ENCODE measurements at regions of chr2 and their contacts with region 1.

Region 1: DNA sequence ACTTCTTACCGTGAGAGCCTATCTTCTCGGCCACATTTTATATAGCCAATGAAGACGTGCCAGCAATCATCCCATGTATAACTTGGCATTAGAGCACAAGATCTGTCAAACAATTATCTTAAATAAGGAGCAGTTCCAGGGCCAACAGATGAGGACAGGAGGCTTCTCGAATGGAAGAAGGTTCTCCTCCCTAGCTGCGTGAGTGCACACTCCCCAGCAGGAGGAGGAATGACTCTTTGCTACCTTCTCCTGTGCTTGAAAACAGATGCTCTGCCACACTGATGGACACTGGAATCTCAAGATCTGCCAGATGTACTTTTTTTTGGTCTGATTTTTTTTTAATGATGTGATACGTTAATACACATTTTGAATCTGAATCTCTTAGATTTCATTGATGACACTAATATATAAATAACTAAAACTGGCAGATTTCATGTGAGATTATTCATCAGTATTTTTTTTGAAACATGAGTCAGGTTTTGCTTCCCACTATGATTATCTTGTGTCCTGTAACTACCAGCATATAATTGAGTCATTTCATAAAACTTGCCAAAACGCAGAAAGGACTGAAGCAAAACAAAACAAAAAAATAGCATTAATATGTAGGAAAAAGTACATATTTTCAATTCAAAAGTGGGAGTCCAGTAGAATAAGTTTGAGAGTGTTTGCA is 626 bp upstream of the VIT start:
- DNase-seq: no peak
- ATAC-seq: no peak
- H3K4me3 ChIP-seq: no peak overlapping the region
- H3K4me3 Mint-ChIP-seq: no peak overlapping the region
- H3K27ac ChIP-seq: no peak overlapping the region
- H3K27ac Mint-ChIP-seq: no peak overlapping the region
- H3K4me1 ChIP-seq: no peaks in the 10 kb centered on the region
- H3K4me1 Mint-ChIP-seq: no peaks in the 10 kb centered on the region
- H3K27me3 ChIP-seq: no peaks in the 10 kb centered on the region
- H3K27me3 Mint-ChIP-seq: peaks cover 1% of the 10 kb centered on the region
- CTCF ChIP-seq: no peak

Region 2: GRCh38 chr2:35125278-35125677 is 1570.6 kb before region 1 on chr2:
- CTCF ChIA-PET with region 1: no interaction called
- POLR2A ChIA-PET with region 1: no interaction called
- intact Hi-C with region 1: loop called in 1 of 2 experiments (anchors 5 kb)
- DNase-seq: no peak
- ATAC-seq: no peak
- H3K4me3 ChIP-seq: no peak overlapping the region
- H3K4me3 Mint-ChIP-seq: no peak overlapping the region
- H3K27ac ChIP-seq: no peak overlapping the region
- H3K27ac Mint-ChIP-seq: no peak overlapping the region
- H3K4me1 ChIP-seq: no peaks in the 10 kb centered on the region
- H3K4me1 Mint-ChIP-seq: no peaks in the 10 kb centered on the region
- H3K27me3 ChIP-seq: no peaks in the 10 kb centered on the region
- H3K27me3 Mint-ChIP-seq: no peaks in the 10 kb centered on the region
- CTCF ChIP-seq: no peak

Region 3: DNA sequence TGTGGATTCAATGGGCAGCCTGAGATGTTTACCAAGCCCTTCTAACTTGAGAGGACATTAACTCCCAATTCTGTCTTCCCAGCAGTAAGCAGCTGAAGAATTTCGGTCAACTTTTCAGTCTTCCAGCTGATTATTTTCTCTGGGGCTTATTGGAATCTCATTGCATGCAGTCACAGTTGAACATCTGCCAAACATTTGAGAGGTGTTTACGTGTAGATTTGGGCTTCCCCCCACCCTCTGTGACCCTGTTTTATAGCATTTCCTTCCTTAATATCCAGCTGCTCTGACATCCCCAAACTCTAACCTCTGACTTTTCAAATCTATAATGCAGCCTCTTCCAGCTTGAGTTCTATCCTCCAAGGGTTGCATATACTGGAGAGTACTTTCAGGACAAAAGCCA is 15.9 kb before region 1 on chr2:
- CTCF ChIA-PET with region 1: no interaction called
- POLR2A ChIA-PET with region 1: no interaction called
- intact Hi-C with region 1: no loop called
- DNase-seq: no peak
- ATAC-seq: no peak
- H3K4me3 ChIP-seq: no peak overlapping the region
- H3K4me3 Mint-ChIP-seq: no peak overlapping the region
- H3K27ac ChIP-seq: no peak overlapping the region
- H3K27ac Mint-ChIP-seq: no peak overlapping the region
- H3K4me1 ChIP-seq: no peaks in the 10 kb centered on the region
- H3K4me1 Mint-ChIP-seq: peaks cover 11% of the 10 kb centered on the region
- H3K27me3 ChIP-seq: no peaks in the 10 kb centered on the region
- H3K27me3 Mint-ChIP-seq: peaks cover 5% of the 10 kb centered on the region
- CTCF ChIP-seq: no peak